ENCODE measurements at regions of chr2 and their contacts with region 1.

Region 1: DNA sequence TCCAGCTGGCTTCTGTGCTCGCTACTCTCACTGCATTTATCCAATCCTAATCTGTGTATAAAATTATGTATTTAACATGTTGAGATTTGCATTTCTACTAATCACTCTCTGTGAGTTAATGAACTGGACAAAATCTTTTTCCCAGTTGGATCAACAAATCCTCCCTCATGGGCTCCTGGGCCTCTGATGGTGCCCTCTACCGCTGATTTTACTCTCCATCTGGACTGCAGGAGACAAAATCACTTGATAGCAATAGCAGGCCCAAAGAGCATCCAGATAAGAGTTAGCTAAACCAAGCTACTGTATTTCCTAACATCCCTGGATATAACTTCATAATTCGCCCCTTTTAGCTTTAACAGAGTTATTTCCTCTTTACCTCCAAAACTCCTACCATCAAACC is 14.4 kb downstream of the REG3G start:
- DNase-seq: no peak
- ATAC-seq: no peak
- H3K4me3 ChIP-seq: no peak overlapping the region
- H3K27ac ChIP-seq: no peak overlapping the region
- H3K4me1 ChIP-seq: no peaks in the 10 kb centered on the region
- H3K27me3 ChIP-seq: no peaks in the 10 kb centered on the region
- CTCF ChIP-seq: no peak

Region 2: DNA sequence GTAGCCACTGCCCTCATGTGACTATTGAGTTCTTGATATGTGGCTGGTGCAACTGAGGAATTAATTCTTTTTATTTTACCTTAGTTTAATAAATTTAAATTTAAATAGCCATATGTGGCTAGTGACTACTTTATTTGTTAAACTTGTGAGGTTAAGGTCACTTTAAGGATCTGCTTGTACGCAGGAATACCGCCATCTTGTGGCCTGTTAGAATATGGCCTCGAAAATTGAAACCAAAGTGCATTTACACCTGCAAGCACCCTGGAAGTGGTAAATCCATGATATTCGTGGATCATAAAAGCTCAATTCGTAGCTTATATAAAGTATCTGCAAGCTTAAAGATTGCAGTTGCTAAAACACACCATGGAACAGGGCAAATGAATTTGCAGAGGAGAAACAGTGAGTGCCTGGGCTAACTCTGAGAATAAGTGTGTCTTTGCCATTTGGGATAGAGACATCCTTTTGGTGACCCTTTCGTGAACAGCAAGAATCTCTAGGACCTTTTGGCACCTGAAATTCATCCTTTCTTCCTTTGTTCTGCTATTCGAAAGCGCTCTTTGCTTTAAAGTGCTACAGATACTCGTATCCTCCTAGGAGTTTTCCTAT is 179.5 kb after region 1 on chr2:
- intact Hi-C with region 1: loop called in 1 of 2 experiments (anchors 2 kb)
- DNase-seq: no peak
- ATAC-seq: no peak
- H3K4me3 ChIP-seq: no peak overlapping the region
- H3K27ac ChIP-seq: no peak overlapping the region
- H3K4me1 ChIP-seq: no peaks in the 10 kb centered on the region
- H3K27me3 ChIP-seq: no peaks in the 10 kb centered on the region
- CTCF ChIP-seq: peak; percentile 47

Measured in psoas muscle (tissue), 8 donors.